GM12878 (cell line): ENCODE measurements at regions of chr17 and their contacts with region 1.

Region 1: DNA sequence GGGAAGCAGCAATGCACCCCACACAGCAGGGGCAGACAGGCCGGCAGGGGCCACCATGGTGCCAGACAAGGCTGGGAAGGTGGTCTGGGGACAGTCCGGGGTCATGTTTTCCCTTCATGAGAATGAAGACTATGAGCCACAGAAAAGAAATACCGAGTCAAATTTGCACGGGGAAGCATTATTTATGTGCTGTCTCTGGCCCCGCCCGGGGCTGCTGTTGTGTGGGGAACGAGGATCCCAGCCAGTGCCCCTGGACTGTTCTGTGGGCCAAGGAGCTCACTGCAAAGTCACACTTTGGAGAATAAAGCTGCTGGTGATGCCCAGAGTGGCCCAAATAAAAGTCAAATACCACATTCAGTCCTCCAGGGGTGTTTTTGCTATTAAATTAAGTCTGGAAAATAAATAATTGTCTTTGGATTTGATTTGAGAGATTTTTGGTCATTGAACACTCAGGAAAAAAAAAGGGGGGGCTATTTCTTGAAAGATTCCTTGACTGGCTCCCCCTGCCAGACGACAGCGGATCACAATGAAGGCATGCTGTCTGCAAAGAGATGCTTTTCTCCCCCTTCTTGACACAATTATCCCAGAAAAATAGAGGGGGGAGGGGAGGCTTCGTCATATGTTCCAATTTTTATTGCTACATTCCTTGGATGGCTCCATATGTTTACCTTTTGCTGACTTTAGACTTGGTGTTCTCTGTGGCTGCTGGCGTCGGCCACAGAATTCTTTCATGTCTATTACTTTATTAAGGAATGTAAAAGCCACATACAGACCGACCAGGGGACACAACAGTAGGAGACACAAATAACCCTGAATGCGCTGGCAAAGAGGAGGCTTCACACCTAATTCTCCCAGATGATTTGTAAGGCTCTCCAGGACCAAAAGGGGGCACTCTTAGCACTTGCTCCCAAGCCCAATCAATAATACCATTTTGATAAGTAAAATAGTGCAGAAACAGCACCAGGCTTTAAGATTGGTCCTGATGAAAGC is 27.1 kb upstream of the ANKFN1 start:
- DNase-seq: no peak
- ATAC-seq: no peak
- H3K4me3 ChIP-seq: no peak overlapping the region
- H3K27ac ChIP-seq: no peak overlapping the region
- H3K4me1 ChIP-seq: no peaks in the 10 kb centered on the region
- H3K27me3 ChIP-seq: no peaks in the 10 kb centered on the region
- CTCF ChIP-seq: peak; percentile 17 to 25 (median 21); a peak in 2 of 6 replicates
- EP300 ChIP-seq: no peak
- POLR2A ChIP-seq: no peak
- RAD21 ChIP-seq: peak; percentile 55

Region 2: DNA sequence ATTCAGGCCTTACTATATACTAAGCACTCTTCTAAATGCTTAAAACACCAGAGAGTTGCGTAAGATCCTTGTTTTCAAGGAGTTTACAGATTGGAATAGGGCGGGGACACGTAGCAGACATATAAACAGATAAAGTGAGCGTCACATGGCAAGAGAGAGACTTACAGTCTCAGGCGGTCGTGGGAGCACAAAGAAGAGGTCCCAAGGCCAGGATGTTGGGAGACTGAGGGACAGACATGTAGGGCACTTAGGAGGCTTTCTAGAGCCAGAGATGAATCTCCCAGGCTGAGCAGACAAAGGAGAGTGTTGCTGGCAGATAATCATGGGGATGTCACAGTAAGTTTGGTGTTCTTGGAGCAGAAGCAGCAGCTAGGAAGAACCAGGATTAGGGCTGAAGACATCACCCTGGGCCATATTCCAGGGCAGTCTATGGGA is 91.9 kb before region 1 on chr17:
- CTCF ChIA-PET with region 1: no interaction called
- POLR2A ChIA-PET with region 1: no interaction called
- RAD21 ChIA-PET with region 1: no interaction called
- SMC1A ChIA-PET with region 1: no interaction called
- in situ Hi-C with region 1: no loop called
- intact Hi-C with region 1: no loop called
- DNase-seq: no peak
- ATAC-seq: no peak
- H3K4me3 ChIP-seq: no peak overlapping the region
- H3K27ac ChIP-seq: no peak overlapping the region
- H3K4me1 ChIP-seq: no peaks in the 10 kb centered on the region
- H3K27me3 ChIP-seq: no peaks in the 10 kb centered on the region
- CTCF ChIP-seq: no peak
- EP300 ChIP-seq: no peak
- POLR2A ChIP-seq: no peak
- RAD21 ChIP-seq: no peak

Region 3: GRCh38 chr17:56319517-56319916 is 193.4 kb after region 1 on chr17:
- CTCF ChIA-PET with region 1: interaction called, 7 read pairs
- POLR2A ChIA-PET with region 1: no interaction called
- RAD21 ChIA-PET with region 1: no interaction called
- SMC1A ChIA-PET with region 1: interaction called, 5 read pairs
- in situ Hi-C with region 1: no loop called
- intact Hi-C with region 1: loop called (anchors 10 kb)
- DNase-seq: peak; percentile 2
- ATAC-seq: peak; percentile 77
- H3K4me3 ChIP-seq: no peak overlapping the region
- H3K27ac ChIP-seq: no peak overlapping the region
- H3K4me1 ChIP-seq: no peaks in the 10 kb centered on the region
- H3K27me3 ChIP-seq: no peaks in the 10 kb centered on the region
- CTCF ChIP-seq: peak; percentile 47 to 57 (median 48); a peak in 5 of 6 replicates
- EP300 ChIP-seq: no peak
- POLR2A ChIP-seq: no peak
- RAD21 ChIP-seq: peak; percentile 56

Region 4: GRCh38 chr17:56715613-56716357 is 589.7 kb after region 1 on chr17:
- CTCF ChIA-PET with region 1: no interaction called
- POLR2A ChIA-PET with region 1: no interaction called
- RAD21 ChIA-PET with region 1: no interaction called
- SMC1A ChIA-PET with region 1: no interaction called
- in situ Hi-C with region 1: no loop called
- intact Hi-C with region 1: no loop called
- DNase-seq: peak; percentile 38
- ATAC-seq: peak; percentile 99
- H3K4me3 ChIP-seq: no peak overlapping the region
- H3K27ac ChIP-seq: no peak overlapping the region
- H3K4me1 ChIP-seq: no peaks in the 10 kb centered on the region
- H3K27me3 ChIP-seq: no peaks in the 10 kb centered on the region; a peak in 2 of 4 replicates
- CTCF ChIP-seq: peak; percentile 76 to 82 (median 78)
- EP300 ChIP-seq: no peak
- POLR2A ChIP-seq: no peak
- RAD21 ChIP-seq: peak; percentile 81